B cell (primary cell): ENCODE measurements at regions of chr4 and their contacts with region 1.

Region 1: DNA sequence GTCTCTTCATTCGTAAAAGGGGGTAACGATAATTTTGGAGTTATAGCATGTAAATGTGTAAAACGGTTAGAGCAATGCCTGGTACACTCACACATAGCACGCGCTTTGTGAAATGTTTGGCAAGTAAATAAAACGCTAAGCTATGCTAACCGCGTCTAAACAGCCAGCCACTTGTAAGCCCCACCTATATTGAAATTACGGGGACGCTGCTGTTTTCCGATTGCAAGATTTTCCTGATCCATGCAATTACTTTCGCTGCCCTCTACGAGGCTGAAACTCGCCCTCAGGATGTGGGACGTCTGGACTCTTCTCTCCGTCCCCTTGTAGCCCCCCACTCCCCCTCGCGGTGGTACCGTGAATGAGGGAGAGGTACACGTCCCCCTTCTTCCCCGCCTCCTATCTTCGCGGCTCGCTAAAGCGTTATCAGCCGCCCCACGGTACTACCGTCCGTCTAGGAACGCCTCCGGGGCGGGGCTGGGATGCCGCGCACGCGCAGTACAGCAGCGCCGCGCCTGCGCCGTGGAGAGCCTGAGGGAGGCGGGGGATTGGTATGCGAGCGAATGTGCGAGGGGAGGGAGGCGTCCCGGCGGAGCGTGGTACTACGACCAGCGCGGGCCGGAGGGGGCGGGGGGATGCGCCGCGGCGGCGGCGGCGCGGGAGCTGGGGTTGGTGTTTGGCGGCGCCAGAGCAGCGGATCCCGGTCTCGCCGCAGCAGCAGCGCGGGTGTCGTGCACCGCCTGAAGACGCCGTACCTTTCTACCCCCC is at the start of gene STIM2:
- DNase-seq: peak; percentile 99
- ATAC-seq: peak; percentile 64
- H3K4me3 ChIP-seq: peak within 1 kb of the TSS; percentile 75 to 95 (median 80)
- H3K4me3 Mint-ChIP-seq: peak within 1 kb of the TSS; percentile 100
- H3K27ac ChIP-seq: peak within 1 kb of the TSS; percentile 77 to 86
- H3K27ac Mint-ChIP-seq: peak within 1 kb of the TSS; percentile 99
- H3K4me1 ChIP-seq: peaks cover 37 to 56% of the 10 kb centered on the region in 2 donors
- H3K4me1 Mint-ChIP-seq: peaks cover 61% of the 10 kb centered on the region
- H3K27me3 ChIP-seq: no peaks in the 10 kb centered on the region
- H3K27me3 Mint-ChIP-seq: no peaks in the 10 kb centered on the region
- CTCF ChIP-seq: peak; percentile 52
- total RNA-seq, gene STIM2: 96.0 and 103 TPM in 2 replicates

Region 2: DNA sequence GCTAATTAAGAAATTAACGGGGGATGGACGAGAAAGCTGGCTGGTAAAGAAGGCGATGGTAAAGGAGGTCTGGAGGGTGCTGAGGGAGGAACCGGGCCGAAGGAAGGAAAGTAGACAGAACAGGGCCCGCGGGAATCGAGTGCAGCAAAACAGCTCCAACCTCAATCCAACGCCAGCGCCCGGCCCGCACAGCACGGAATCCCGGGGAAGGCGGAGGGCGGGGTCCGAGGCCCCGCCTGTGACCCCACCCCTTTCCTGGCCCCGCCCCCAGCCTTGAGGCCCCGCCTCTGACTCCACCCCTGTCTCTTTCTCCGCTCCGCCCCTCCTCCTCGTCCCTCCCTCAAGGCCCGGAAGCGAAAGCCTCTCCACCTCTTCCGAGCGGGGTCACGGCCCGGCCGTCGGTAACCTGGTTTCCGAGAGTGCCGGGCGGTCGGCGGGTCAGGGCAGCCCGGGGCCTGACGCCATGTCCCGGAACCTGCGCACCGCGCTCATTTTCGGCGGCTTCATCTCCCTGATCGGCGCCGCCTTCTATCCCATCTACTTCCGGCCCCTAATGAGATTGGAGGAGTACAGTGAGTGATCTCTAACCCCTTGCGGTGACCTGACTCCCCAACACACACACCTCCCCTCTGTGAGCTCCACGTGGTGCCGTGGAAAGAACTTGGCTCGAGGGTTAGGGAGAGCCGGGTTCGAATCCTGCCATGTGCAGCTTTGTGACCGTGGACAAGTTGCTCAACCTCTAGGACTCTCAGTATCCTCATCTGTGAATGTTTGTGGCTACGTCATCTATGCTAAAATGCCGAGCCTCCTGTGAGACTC is 946.3 kb before region 1 on chr4 and contains the start of gene SMIM20:
- CTCF ChIA-PET with region 1: no interaction called
- POLR2A ChIA-PET with region 1: no interaction called
- intact Hi-C with region 1: loop called (anchors 1 kb)
- DNase-seq: peak; percentile 95
- ATAC-seq: peak; percentile 94
- H3K4me3 ChIP-seq: peak within 1 kb of the TSS; percentile 89 to 95 (median 93)
- H3K4me3 Mint-ChIP-seq: peak within 1 kb of the TSS; percentile 95
- H3K27ac ChIP-seq: peak within 1 kb of the TSS; percentile 92 to 93
- H3K27ac Mint-ChIP-seq: peak within 1 kb of the TSS; percentile 97
- H3K4me1 ChIP-seq: peaks cover 27 to 35% of the 10 kb centered on the region in 2 donors
- H3K4me1 Mint-ChIP-seq: peaks cover 34% of the 10 kb centered on the region
- H3K27me3 ChIP-seq: no peaks in the 10 kb centered on the region
- H3K27me3 Mint-ChIP-seq: no peaks in the 10 kb centered on the region
- CTCF ChIP-seq: no peak
- total RNA-seq, gene SMIM20: 14.3 and 20.2 TPM in 2 replicates

Region 3: DNA sequence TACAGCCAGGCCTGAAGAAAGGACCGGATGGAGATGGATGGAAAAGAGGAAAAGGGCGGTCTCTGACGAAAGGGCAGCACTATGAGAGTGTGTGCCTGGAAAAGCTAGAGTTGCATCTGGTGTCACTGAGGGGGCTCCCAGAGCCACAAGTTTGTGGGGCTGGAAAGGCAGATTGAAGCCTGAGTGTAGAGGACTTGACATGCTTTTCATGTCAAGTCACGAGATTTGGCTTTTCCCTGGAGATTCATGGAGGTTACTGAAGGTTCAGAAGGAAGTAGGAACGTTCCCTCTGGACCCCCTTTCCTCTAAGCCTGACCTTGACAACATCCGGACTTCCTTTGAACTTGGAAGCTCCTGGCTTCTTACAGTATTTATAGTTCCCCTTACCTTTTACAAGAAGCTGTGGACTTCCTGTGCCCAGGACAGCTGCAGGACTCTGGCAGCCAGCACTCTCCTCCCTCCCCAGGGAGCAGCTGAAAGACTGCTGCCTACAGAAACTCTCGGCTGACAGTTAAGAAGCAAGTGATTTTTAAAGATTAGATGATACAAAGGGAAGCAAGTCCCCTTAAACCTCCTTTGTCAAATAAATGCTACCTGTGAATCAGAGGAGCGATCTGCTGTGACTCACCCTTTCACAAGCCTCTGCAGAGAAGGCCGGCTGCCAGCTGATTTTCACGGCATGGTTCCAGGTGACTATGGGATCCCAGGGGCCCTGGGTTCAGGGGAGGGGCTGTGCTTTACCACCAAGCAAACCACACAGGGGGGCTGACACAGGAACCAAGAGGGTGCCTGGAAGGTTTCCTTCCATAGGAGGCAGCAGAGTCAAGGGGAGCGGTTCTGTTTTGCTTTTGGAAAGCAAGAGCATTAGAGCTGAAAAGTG is 72.6 kb before region 1 on chr4:
- CTCF ChIA-PET with region 1: interaction called, 4 read pairs
- POLR2A ChIA-PET with region 1: no interaction called
- intact Hi-C with region 1: loop called (anchors 2 kb)
- DNase-seq: peak; percentile 53
- ATAC-seq: peak; percentile 44
- H3K4me3 ChIP-seq: no peak overlapping the region
- H3K4me3 Mint-ChIP-seq: peak overlapping the region; percentile 30
- H3K27ac ChIP-seq: no peak overlapping the region
- H3K27ac Mint-ChIP-seq: no peak overlapping the region
- H3K4me1 ChIP-seq: peaks cover 29 to 31% of the 10 kb centered on the region in 2 donors
- H3K4me1 Mint-ChIP-seq: peaks cover 33% of the 10 kb centered on the region
- H3K27me3 ChIP-seq: peaks cover 0 to 15% (median 6%) of the 10 kb centered on the region in 4 experiments
- H3K27me3 Mint-ChIP-seq: peaks cover 14% of the 10 kb centered on the region
- CTCF ChIP-seq: peak; percentile 35

Region 4: DNA sequence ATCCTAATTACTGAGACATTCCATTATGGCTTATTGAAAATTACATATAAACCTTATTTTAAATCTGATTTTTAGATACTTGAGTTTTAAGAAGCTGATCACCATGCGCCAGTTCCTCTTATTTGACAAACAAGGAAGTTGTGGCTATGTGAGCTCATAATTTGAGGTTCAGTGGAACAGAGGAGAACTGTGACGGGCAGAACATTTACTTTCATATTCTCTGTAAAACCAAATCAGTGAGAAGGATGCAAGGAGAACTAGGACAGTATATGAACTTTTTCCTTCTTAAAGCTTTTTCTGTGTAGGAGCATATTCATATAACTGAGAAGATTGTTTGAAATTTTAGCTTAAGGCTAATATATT is 25.6 kb after region 1 on chr4:
- CTCF ChIA-PET with region 1: interaction called, 23 read pairs
- POLR2A ChIA-PET with region 1: interaction called, 66 read pairs
- intact Hi-C with region 1: loop called (anchors 1 kb)
- DNase-seq: peak; percentile 87
- ATAC-seq: peak; percentile 74
- H3K4me3 ChIP-seq: peak overlapping the region in 4 of 5 experiments; percentile 25 to 61 (median 42)
- H3K4me3 Mint-ChIP-seq: peak overlapping the region; percentile 78
- H3K27ac ChIP-seq: peak overlapping the region; percentile 95 to 98
- H3K27ac Mint-ChIP-seq: peak overlapping the region; percentile 86
- H3K4me1 ChIP-seq: peaks cover 70 to 71% of the 10 kb centered on the region in 2 donors
- H3K4me1 Mint-ChIP-seq: peaks cover 83% of the 10 kb centered on the region
- H3K27me3 ChIP-seq: no peaks in the 10 kb centered on the region
- H3K27me3 Mint-ChIP-seq: no peaks in the 10 kb centered on the region
- CTCF ChIP-seq: no peak

Region 5: GRCh38 chr4:26936284-26937065 is 76.1 kb after region 1 on chr4:
- CTCF ChIA-PET with region 1: interaction called, 3 read pairs
- POLR2A ChIA-PET with region 1: no interaction called
- intact Hi-C with region 1: loop called (anchors 5 kb)
- DNase-seq: no peak
- ATAC-seq: no peak
- H3K4me3 ChIP-seq: no peak overlapping the region
- H3K4me3 Mint-ChIP-seq: peak overlapping the region; percentile 4
- H3K27ac ChIP-seq: peak overlapping the region in 1 of 2 donors; percentile 72
- H3K27ac Mint-ChIP-seq: peak overlapping the region; percentile 59
- H3K4me1 ChIP-seq: peaks cover 34 to 43% of the 10 kb centered on the region in 2 donors
- H3K4me1 Mint-ChIP-seq: peaks cover 57% of the 10 kb centered on the region
- H3K27me3 ChIP-seq: no peaks in the 10 kb centered on the region
- H3K27me3 Mint-ChIP-seq: no peaks in the 10 kb centered on the region
- CTCF ChIP-seq: no peak